HEK293 (cell line): ENCODE measurements at regions of chr20 and their contacts with region 1.

Region 1: GRCh38 chr20:38805502-38805957 is at the start of gene PPP1R16B:
- H3K4me3 ChIP-seq: peak within 1 kb of the TSS; percentile 40
- H3K27ac ChIP-seq: no peak within 1 kb of the TSS; the same call in 1 of the 2 replicates
- H3K4me1 ChIP-seq: no peaks in the 10 kb centered on the region
- CTCF ChIP-seq: no peak

Region 2: DNA sequence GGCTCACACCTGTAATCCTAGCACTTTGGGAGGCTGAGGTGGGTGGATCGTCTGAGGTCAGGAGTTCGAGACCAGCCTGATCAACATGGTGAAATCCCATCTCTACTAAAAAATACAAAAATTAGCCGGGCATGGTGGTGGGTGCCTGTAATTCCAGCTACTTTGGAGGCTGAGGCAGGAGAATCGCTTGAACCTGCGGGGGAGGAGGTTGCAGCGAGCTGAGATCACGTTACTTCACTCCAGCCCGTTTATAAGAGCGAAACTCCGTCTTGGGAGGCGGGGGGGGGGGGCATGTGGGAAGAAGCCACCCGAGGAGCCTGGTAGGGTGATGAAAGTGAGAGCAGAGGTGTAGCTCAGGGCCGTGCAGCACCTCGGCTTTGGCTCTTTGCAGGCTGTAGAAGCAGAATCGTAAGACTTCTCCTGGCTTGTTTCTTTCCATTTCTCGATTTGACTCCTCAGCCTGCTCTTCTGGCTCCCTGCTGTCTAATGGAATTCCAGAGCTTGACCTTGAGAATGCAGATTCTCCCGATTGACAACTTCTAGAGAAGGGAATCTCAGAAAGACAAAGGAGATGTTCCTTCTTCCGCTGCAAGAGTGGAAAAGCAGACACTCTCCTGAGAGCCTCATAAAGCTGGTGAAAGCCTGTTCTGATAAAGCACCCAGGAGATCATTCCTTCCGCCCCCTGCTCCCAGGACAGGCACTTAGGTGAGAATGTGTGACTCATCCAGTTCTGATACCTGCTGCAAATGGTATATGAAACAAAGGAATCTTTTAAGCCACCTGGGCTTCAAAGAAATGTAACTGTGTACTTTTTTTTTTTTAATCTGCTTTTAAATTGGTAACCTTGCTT is 26.1 kb before region 1 on chr20:
- CTCF ChIA-PET with region 1: no interaction called
- POLR2A ChIA-PET with region 1: no interaction called
- H3K4me3 ChIP-seq: no peak overlapping the region
- H3K27ac ChIP-seq: no peak overlapping the region
- H3K4me1 ChIP-seq: no peaks in the 10 kb centered on the region
- CTCF ChIP-seq: no peak

Region 3: GRCh38 chr20:38790200-38791053 is 15.1 kb before region 1 on chr20:
- CTCF ChIA-PET with region 1: interaction called, 11 read pairs
- POLR2A ChIA-PET with region 1: no interaction called
- H3K4me3 ChIP-seq: no peak overlapping the region
- H3K27ac ChIP-seq: no peak overlapping the region
- H3K4me1 ChIP-seq: no peaks in the 10 kb centered on the region
- CTCF ChIP-seq: peak; percentile 46

Region 4: DNA sequence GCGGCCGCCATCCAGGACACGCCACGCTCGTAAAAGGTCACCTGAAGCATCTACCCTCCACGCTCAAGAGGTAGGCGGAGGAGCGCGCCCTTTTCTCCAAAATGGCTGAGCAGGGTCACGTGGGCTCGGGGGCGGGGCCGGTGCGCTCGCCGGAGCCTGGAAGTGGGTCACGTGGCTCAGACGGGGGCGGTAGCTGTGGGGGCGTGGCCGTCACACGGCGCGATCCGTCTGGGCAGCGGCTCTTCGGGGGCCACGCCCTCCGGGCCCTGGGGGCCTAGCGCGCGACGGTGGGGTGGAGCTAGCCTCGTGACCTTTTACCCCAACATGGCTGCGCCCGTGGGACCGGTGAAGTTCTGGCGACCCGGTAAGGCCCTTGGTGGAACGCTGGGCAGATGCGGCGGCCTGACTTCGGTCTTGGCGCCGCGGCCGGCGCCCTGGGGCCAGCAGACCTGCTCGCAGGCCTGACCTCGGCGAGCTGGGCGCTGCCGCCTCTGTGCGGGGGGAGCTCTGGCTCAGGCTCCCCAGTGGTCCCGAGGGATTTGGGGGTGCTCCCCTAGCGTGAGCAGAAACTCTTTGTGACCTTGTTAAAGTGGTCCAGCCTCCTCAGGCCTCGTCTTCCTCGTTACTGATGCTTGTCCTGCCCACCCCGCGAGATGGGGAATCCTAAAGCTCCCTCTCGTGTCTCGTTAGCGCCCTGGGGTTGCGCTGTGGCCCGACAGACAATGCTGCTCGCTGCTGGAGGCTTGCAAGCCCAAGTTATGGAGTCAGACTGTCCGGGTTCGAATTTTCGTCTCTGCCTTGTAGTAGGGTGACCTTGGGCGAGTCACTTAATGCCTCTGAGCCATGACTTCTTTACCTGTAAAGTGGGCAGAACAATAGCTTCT is 156.8 kb after region 1 on chr20 and contains the start of gene DHX35:
- CTCF ChIA-PET with region 1: no interaction called
- POLR2A ChIA-PET with region 1: interaction called, 10 read pairs
- H3K4me3 ChIP-seq: peak within 1 kb of the TSS; percentile 99
- H3K27ac ChIP-seq: peak within 1 kb of the TSS; percentile 71
- H3K4me1 ChIP-seq: peaks cover 4% of the 10 kb centered on the region; the same call in 1 of the 2 replicates
- CTCF ChIP-seq: peak; percentile 82

Region 5: GRCh38 chr20:38985603-38986170 is 180.2 kb after region 1 on chr20:
- CTCF ChIA-PET with region 1: no interaction called
- POLR2A ChIA-PET with region 1: no interaction called
- H3K4me3 ChIP-seq: no peak overlapping the region
- H3K27ac ChIP-seq: no peak overlapping the region
- H3K4me1 ChIP-seq: peaks cover 8% of the 10 kb centered on the region; the same call in 1 of the 2 replicates
- CTCF ChIP-seq: no peak